ENCODE measurements at regions of chr7 and their contacts with region 1.

Region 1: GRCh38 chr7:105036217-105037168 is 22.5 kb downstream of the KMT2E start:
- DNase-seq: no peak
- ATAC-seq: peak in 1 of 4 experiments; percentile 23
- H3K4me3 ChIP-seq: no peak overlapping the region
- H3K4me3 Mint-ChIP-seq: peak overlapping the region; percentile 7 to 27 (median 24)
- H3K27ac ChIP-seq: peak overlapping the region; percentile 34
- H3K27ac Mint-ChIP-seq: peak overlapping the region; percentile 37 to 68
- H3K4me1 ChIP-seq: peaks cover 4 to 45% of the 10 kb centered on the region in 2 experiments
- H3K4me1 Mint-ChIP-seq: peaks cover 61 to 72% (median 68%) of the 10 kb centered on the region in 3 donors
- H3K27me3 ChIP-seq: no peaks in the 10 kb centered on the region
- H3K27me3 Mint-ChIP-seq: no peaks in the 10 kb centered on the region

Region 2: DNA sequence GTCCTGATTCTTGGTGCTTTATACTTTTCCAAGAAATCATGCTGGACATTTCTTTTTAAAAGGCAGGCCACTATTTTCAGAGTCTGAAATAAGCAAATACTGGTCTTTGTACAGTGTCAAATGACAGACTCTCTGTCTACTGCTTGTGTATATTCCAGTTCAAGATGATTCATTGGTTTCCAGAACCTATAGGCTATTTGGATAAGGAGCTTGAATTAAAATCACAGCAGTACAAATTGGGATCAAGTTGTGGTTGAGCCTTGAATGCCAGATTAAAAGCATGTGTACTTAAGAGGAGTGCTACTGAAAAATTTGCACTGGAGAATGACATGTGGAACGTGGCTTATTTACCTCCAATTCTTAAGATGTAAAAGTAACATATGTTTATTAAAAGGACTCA is 11.8 kb before region 1 on chr7:
- CTCF ChIA-PET with region 1: interaction called in 1 of 2 experiments, 4 read pairs
- POLR2A ChIA-PET with region 1: interaction called, 3 to 10 read pairs
- DNase-seq: no peak
- ATAC-seq: no peak
- H3K4me3 ChIP-seq: no peak overlapping the region
- H3K4me3 Mint-ChIP-seq: peak overlapping the region; percentile 21 to 38 (median 28)
- H3K27ac ChIP-seq: no peak overlapping the region
- H3K27ac Mint-ChIP-seq: no peak overlapping the region
- H3K4me1 ChIP-seq: peaks cover 34 to 41% of the 10 kb centered on the region in 2 experiments
- H3K4me1 Mint-ChIP-seq: peaks cover 85 to 92% (median 92%) of the 10 kb centered on the region in 3 donors
- H3K27me3 ChIP-seq: no peaks in the 10 kb centered on the region
- H3K27me3 Mint-ChIP-seq: no peaks in the 10 kb centered on the region